ENCODE measurements at regions of chr1 and their contacts with region 1.

Region 1: GRCh38 chr1:25616095-25616986 is at the start of gene MAN1C1:
- DNase-seq: peak; percentile 94
- ATAC-seq: peak; percentile 92
- total RNA-seq, gene MAN1C1: 17.5 TPM

Region 2: GRCh38 chr1:25392841-25393240 is 223.5 kb before region 1 on chr1:
- intact Hi-C with region 1: no loop called
- DNase-seq: no peak
- ATAC-seq: no peak

Region 3: GRCh38 chr1:25743826-25744581 is 127.7 kb after region 1 on chr1:
- intact Hi-C with region 1: loop called (anchors 5 kb)
- DNase-seq: peak; percentile 81
- ATAC-seq: peak; percentile 87

Measured in Right ventricle myocardium superior (tissue), 1 donor.